Activated CD4-positive, alpha-beta memory T cell treated with anti-CD3 and anti-CD28 coated beads, Interleukin-2, amount 10 ng/mL, durations not matched to agents 7 days and 5 days (primary cell): ENCODE measurements at regions of chr14 and their contacts with region 1.

Region 1: DNA sequence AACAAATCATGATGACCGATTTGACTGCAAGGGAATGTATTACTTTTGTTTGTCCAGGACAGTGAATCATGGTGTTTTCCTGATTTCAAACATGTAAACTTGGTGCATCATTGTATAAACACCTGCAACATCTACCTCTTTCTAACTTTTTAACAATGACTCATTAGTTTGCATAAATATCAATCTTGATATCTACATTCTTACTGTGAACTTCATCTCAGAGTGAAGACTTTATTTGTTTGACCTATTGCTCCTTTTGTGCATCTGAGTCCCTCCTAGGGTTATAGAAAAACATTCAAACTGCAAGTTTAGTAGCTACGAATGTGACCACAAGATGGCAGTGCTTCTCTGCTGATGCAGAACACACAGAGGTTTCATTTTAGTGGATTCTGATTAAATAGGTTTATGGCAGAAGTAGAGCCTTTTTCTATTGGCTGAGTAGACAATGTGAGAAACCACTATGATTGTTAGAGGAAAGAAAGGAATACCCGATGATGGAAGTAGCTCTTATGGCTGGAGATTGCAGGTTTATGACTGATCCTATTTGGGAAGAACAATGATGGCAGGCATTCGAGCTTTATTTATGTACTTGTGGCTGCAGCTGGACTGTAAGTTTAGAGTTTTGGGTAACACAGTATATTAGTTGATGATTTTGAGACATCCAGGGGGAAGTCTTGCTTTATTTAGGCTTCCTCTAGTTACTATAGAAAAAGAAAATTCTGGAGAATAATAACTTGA is 244.2 kb upstream of the OR4E1 start:
- DNase-seq: peak; percentile 66
- H3K4me3 Mint-ChIP-seq: peak overlapping the region; percentile 71
- H3K27ac Mint-ChIP-seq: peak overlapping the region; percentile 74
- H3K4me1 Mint-ChIP-seq: peaks cover 69% of the 10 kb centered on the region
- H3K27me3 Mint-ChIP-seq: no peaks in the 10 kb centered on the region

Region 2: GRCh38 chr14:21686468-21686867 is 231.4 kb before region 1 on chr14:
- CTCF ChIA-PET with region 1: no interaction called
- POLR2A ChIA-PET with region 1: no interaction called
- DNase-seq: no peak
- H3K4me3 Mint-ChIP-seq: no peak overlapping the region
- H3K27ac Mint-ChIP-seq: no peak overlapping the region
- H3K4me1 Mint-ChIP-seq: no peaks in the 10 kb centered on the region
- H3K27me3 Mint-ChIP-seq: peaks cover 26% of the 10 kb centered on the region

Region 3: DNA sequence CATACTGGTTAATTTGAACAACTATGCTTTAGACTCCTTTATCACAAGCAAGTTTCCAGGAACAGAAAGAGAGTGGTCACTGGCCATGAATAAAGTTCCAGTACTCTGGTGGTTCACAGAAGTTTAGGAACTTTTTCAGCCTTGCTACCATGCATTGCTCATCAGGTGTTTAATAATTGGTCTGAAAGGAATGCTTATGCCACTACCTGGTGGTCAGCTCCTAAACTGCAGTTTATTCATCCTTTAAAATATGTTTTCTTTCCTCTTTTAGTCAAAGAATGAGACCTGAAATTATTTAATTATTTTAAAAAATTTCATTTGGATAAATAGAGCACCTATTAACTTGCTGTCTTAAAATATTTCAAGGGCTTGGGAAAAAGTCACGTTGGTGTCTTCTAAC is 15.8 kb after region 1 on chr14:
- CTCF ChIA-PET with region 1: interaction called, 18 read pairs
- POLR2A ChIA-PET with region 1: interaction called, 3 read pairs
- DNase-seq: no peak
- H3K4me3 Mint-ChIP-seq: no peak overlapping the region
- H3K27ac Mint-ChIP-seq: no peak overlapping the region
- H3K4me1 Mint-ChIP-seq: peaks cover 2% of the 10 kb centered on the region
- H3K27me3 Mint-ChIP-seq: peaks cover 9% of the 10 kb centered on the region

Region 4: GRCh38 chr14:22010545-22011252 is 92.8 kb after region 1 on chr14:
- CTCF ChIA-PET with region 1: no interaction called
- POLR2A ChIA-PET with region 1: no interaction called
- DNase-seq: no peak
- H3K4me3 Mint-ChIP-seq: no peak overlapping the region
- H3K27ac Mint-ChIP-seq: no peak overlapping the region
- H3K4me1 Mint-ChIP-seq: peaks cover 32% of the 10 kb centered on the region
- H3K27me3 Mint-ChIP-seq: no peaks in the 10 kb centered on the region